ENCODE measurements at regions of chr17 and their contacts with region 1.

Region 1: GRCh38 chr17:41060052-41060604 is at the start of gene KRTAP2-3:
- DNase-seq: peak in 1 of 2 experiments; percentile 24
- H3K4me3 ChIP-seq: peak within 1 kb of the TSS; percentile 22; the same call in 1 of the 2 replicates
- H3K4me3 Mint-ChIP-seq: peak within 1 kb of the TSS; percentile 68
- H3K27ac Mint-ChIP-seq: peak within 1 kb of the TSS; percentile 76
- H3K4me1 ChIP-seq: peaks cover 49% of the 10 kb centered on the region
- H3K4me1 Mint-ChIP-seq: peaks cover 45% of the 10 kb centered on the region
- H3K27me3 ChIP-seq: no peaks in the 10 kb centered on the region
- H3K27me3 Mint-ChIP-seq: no peaks in the 10 kb centered on the region
- CTCF ChIP-seq: no peak
- total RNA-seq, gene KRTAP2-3: 3.7 and 4.9 TPM in 2 replicates

Region 2: DNA sequence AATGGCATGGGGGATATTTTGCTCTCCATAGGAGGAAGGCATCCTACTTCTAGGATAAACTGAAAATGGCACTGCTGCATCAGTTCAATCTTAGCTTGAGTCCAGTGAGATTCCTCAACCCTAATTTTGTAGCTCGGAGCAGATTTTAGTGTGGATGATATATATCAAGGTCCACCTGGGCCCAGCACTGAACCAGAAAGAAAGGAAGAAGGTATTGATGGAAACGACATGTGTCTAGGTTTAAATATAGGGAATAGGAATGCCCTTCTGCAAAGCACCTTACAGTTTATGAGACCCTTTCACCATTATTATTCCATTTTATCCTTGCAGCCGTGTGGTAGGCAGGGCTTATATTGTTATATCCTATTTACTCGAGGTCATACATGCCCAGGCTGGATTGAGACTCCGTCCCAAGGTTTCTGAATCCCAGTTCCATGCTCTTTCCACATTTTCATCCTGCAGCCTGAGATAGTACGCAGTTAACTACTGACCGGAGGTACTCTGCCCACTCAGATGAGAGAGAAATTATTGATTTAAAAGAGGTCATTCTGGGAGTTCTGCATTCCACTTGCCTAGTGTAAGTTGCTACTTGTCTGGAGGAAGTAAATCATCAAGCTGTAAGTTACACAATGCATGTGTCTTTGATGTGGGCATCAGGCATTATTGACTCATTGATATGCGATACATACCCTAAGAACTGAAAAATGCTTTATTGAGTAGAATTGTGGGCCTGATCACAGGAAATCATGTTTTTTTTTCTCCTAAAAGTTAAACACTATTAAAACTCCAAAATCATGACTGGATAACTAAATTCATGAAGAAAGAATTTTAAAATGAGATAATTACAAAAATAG is 103.5 kb before region 1 on chr17:
- CTCF ChIA-PET with region 1: interaction called, 8 read pairs
- POLR2A ChIA-PET with region 1: no interaction called
- intact Hi-C with region 1: loop called (anchors 1 kb)
- DNase-seq: peak; percentile 75 to 82
- H3K4me3 ChIP-seq: no peak overlapping the region
- H3K4me3 Mint-ChIP-seq: peak overlapping the region; percentile 62
- H3K27ac Mint-ChIP-seq: peak overlapping the region; percentile 89
- H3K4me1 ChIP-seq: peaks cover 79% of the 10 kb centered on the region
- H3K4me1 Mint-ChIP-seq: peaks cover 72% of the 10 kb centered on the region
- H3K27me3 ChIP-seq: no peaks in the 10 kb centered on the region
- H3K27me3 Mint-ChIP-seq: no peaks in the 10 kb centered on the region
- CTCF ChIP-seq: no peak

Region 3: GRCh38 chr17:41026715-41027471 is 33.2 kb before region 1 on chr17 and contains the start of gene KRTAP1-5:
- CTCF ChIA-PET with region 1: no interaction called
- POLR2A ChIA-PET with region 1: no interaction called
- intact Hi-C with region 1: no loop called
- DNase-seq: no peak
- H3K4me3 ChIP-seq: no peak within 1 kb of the TSS
- H3K4me3 Mint-ChIP-seq: no peak within 1 kb of the TSS
- H3K27ac Mint-ChIP-seq: no peak within 1 kb of the TSS
- H3K4me1 ChIP-seq: no peaks in the 10 kb centered on the region
- H3K4me1 Mint-ChIP-seq: no peaks in the 10 kb centered on the region
- H3K27me3 ChIP-seq: no peaks in the 10 kb centered on the region
- H3K27me3 Mint-ChIP-seq: no peaks in the 10 kb centered on the region
- CTCF ChIP-seq: no peak
- total RNA-seq, gene KRTAP1-5: not detected in 2 replicates

Region 4: GRCh38 chr17:41284043-41284442 is 223.9 kb after region 1 on chr17:
- CTCF ChIA-PET with region 1: interaction called, 3 read pairs
- POLR2A ChIA-PET with region 1: no interaction called
- intact Hi-C with region 1: loop called (anchors 10 kb)
- DNase-seq: peak in 1 of 2 experiments; percentile 22
- H3K4me3 ChIP-seq: no peak overlapping the region
- H3K4me3 Mint-ChIP-seq: no peak overlapping the region
- H3K27ac Mint-ChIP-seq: no peak overlapping the region
- H3K4me1 ChIP-seq: peaks cover 31% of the 10 kb centered on the region
- H3K4me1 Mint-ChIP-seq: peaks cover 34% of the 10 kb centered on the region
- H3K27me3 ChIP-seq: no peaks in the 10 kb centered on the region
- H3K27me3 Mint-ChIP-seq: no peaks in the 10 kb centered on the region
- CTCF ChIP-seq: no peak